ENCODE measurements at regions of chr7 and their contacts with region 1.

Region 1: DNA sequence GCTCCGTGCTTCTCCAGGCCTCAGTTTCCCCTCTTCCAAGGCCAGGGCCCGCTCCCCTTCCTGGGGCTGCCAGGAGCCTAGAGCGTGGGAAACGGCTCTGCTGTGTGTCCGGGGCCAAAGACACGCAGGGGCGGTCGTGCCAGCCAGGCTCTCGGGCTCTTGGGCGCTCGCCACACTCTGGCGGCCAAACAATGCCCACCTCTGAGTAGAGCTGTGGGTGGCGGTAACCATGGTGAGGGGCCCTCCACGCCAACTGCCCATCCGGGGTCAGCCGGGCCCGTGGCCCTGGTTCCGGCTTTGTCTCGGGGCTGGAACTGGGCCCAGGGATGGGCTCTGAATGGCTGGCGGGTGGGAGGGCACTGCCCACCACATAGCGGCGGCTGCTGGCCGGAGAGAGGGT is 16.0 kb downstream of the GRIFIN start:
- DNase-seq: no peak
- H3K4me3 ChIP-seq: no peak overlapping the region
- H3K27ac ChIP-seq: no peak overlapping the region
- H3K4me1 ChIP-seq: peaks cover 11% of the 10 kb centered on the region
- H3K27me3 ChIP-seq: no peaks in the 10 kb centered on the region
- CTCF ChIP-seq: no peak

Region 2: GRCh38 chr7:2037808-2038522 is 422.2 kb before region 1 on chr7:
- CTCF ChIA-PET with region 1: no interaction called
- POLR2A ChIA-PET with region 1: no interaction called
- intact Hi-C with region 1: no loop called
- DNase-seq: no peak
- H3K4me3 ChIP-seq: no peak overlapping the region
- H3K27ac ChIP-seq: no peak overlapping the region
- H3K4me1 ChIP-seq: no peaks in the 10 kb centered on the region
- H3K27me3 ChIP-seq: no peaks in the 10 kb centered on the region
- CTCF ChIP-seq: no peak

Region 3: GRCh38 chr7:2471396-2471795 is 11.2 kb after region 1 on chr7:
- CTCF ChIA-PET with region 1: interaction called, 13 read pairs
- POLR2A ChIA-PET with region 1: no interaction called
- intact Hi-C with region 1: no loop called
- DNase-seq: no peak
- H3K4me3 ChIP-seq: no peak overlapping the region
- H3K27ac ChIP-seq: no peak overlapping the region
- H3K4me1 ChIP-seq: peaks cover 5% of the 10 kb centered on the region
- H3K27me3 ChIP-seq: no peaks in the 10 kb centered on the region
- CTCF ChIP-seq: no peak

Measured in PC-9 (cell line).